Gastrocnemius medialis (tissue), 4 donors: ENCODE measurements at regions of chr6 and their contacts with region 1.

Region 1: GRCh38 chr6:7615611-7616383 is 25.8 kb downstream of the SNRNP48 start:
- DNase-seq: no peak
- ATAC-seq: peak; percentile 47 to 51
- H3K4me3 ChIP-seq: no peak overlapping the region
- H3K27ac ChIP-seq: no peak overlapping the region
- H3K4me1 ChIP-seq: no peaks in the 10 kb centered on the region
- H3K27me3 ChIP-seq: no peaks in the 10 kb centered on the region
- CTCF ChIP-seq: peak; percentile 46 to 67 (median 58)
- POLR2A ChIP-seq: no peak

Region 2: DNA sequence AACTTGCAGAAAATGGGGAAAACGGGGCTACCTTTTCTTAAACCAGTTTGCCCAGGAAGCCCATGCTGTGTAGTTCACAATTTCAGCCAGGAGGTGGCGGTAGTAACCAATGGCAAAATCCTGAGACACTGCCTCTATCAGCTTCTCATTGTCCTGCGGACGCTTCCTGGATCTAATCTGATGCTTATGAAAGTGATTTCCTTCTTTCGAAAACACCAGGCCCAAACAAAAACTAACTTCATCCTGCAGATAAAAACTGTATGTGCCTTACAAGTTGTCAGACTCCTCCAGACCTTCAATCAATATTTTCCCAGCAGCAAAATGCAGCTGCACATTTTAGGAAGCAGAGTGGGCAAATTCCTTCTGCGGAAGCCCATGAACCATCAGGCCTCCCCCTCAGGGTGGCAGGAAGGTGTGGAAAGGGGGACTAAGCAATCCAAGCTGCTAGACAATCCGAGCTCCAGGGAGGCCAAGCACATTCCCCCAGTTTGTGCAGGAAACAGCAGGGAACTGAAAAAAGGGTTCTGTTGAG is 938.8 kb before region 1 on chr6:
- in situ Hi-C with region 1: loop called (anchors 25 kb)
- intact Hi-C with region 1: loop called (anchors 5 kb)
- DNase-seq: peak; percentile 50 to 68
- ATAC-seq: peak; percentile 88 to 89
- H3K4me3 ChIP-seq: no peak overlapping the region
- H3K27ac ChIP-seq: peak overlapping the region in 3 of 4 donors; percentile 22 to 51 (median 49)
- H3K4me1 ChIP-seq: peaks cover 0 to 3% of the 10 kb centered on the region in 2 donors
- H3K27me3 ChIP-seq: no peaks in the 10 kb centered on the region
- CTCF ChIP-seq: peak; percentile 88 to 98 (median 91)
- POLR2A ChIP-seq: no peak

Region 3: DNA sequence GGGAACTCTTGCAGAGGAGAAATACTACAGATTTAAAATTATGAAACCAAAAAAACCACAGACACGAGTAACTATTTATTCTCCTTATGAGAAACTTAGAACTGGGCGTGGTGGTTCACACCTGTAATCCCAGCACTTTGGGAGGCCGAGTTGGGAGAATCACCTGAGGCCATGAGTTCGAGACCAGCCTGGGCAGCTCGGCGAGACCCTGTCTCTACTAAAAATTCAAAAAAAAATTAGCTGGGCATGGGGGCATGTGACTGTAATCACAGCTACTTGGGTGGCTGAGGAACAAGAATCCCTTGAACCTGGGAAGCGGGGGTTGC is 339.6 kb before region 1 on chr6:
- in situ Hi-C with region 1: loop called in 3 of 4 experiments (anchors 5 to 25 kb)
- intact Hi-C with region 1: loop called (anchors 2 kb)
- DNase-seq: no peak
- ATAC-seq: no peak
- H3K4me3 ChIP-seq: no peak overlapping the region
- H3K27ac ChIP-seq: no peak overlapping the region
- H3K4me1 ChIP-seq: no peaks in the 10 kb centered on the region
- H3K27me3 ChIP-seq: no peaks in the 10 kb centered on the region
- CTCF ChIP-seq: no peak
- POLR2A ChIP-seq: no peak

Region 4: GRCh38 chr6:7282097-7282906 is 333.5 kb before region 1 on chr6:
- in situ Hi-C with region 1: loop called in 3 of 4 experiments (anchors 5 to 25 kb)
- intact Hi-C with region 1: loop called (anchors 2 kb)
- DNase-seq: no peak
- ATAC-seq: no peak
- H3K4me3 ChIP-seq: no peak overlapping the region
- H3K27ac ChIP-seq: no peak overlapping the region
- H3K4me1 ChIP-seq: no peaks in the 10 kb centered on the region
- H3K27me3 ChIP-seq: no peaks in the 10 kb centered on the region
- CTCF ChIP-seq: no peak
- POLR2A ChIP-seq: no peak